AG04449 (cell line): ENCODE measurements at regions of chr2 and their contacts with region 1.

Region 1: DNA sequence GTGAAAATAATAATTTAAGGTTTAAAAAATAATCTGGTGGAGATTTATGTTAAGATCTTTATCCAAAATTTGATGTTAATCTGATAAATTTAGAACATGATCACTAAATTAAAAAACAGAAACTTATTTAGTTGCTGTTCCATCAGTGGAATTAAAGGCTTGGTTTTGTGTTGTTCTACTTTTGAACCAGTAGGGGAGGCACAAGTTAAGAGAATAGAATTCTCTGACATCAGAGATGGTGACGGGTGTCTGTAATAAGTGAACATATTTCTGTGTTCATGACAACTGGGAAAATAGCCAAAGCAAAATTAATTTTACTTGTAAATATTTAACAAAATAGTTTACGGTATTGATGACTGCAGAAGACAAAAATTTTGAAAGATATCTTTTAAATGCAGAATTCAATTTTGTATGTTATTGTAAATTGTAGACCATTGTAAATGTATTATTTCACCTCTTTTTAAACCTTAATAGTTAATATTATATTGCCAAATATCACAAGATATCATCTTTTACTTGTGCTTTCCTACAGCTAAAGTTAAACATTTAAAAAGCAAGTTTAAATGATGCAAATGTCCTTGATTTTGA is 106.0 kb downstream of the UBR3 start:
- DNase-seq: no peak
- H3K4me3 ChIP-seq: no peak overlapping the region
- CTCF ChIP-seq: peak; percentile 40

Region 2: GRCh38 chr2:169452080-169452479 is 481.1 kb before region 1 on chr2:
- CTCF ChIA-PET with region 1: interaction called, 28 read pairs
- POLR2A ChIA-PET with region 1: no interaction called
- DNase-seq: no peak
- H3K4me3 ChIP-seq: no peak overlapping the region
- CTCF ChIP-seq: peak; percentile 23

Region 3: GRCh38 chr2:169824373-169825333 is 108.6 kb before region 1 on chr2 and contains the start of gene METTL5:
- CTCF ChIA-PET with region 1: interaction called, 10 read pairs
- POLR2A ChIA-PET with region 1: no interaction called
- DNase-seq: no peak
- H3K4me3 ChIP-seq: peak within 1 kb of the TSS; percentile 81
- CTCF ChIP-seq: peak; percentile 84

Region 4: DNA sequence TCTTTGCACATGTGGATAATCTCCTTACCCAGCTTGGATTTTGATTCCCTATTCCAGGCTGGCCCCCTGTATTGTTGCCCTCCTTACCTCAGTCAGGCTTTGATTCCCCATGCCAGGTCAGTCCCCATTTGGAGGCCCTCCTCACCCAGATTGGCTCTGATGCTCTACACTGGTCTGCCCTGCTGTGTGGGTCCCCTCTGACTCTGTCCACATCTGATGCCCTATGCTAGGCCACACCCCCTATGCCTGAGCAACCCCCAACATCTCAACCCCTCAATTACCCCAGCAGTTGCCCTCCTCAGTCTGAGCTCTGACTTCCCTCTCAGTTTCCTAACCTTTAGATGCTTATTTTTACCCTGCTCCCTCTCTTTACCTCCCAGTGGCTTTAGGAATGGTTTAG is 16.6 kb before region 1 on chr2:
- CTCF ChIA-PET with region 1: interaction called, 13 read pairs
- POLR2A ChIA-PET with region 1: no interaction called
- DNase-seq: no peak
- H3K4me3 ChIP-seq: no peak overlapping the region
- CTCF ChIP-seq: no peak

Region 5: GRCh38 chr2:169945515-169945914 is 12.3 kb after region 1 on chr2:
- CTCF ChIA-PET with region 1: interaction called, 11 read pairs
- POLR2A ChIA-PET with region 1: no interaction called
- DNase-seq: no peak
- H3K4me3 ChIP-seq: no peak overlapping the region
- CTCF ChIP-seq: no peak